HepG2 (cell line): ENCODE measurements at regions of chr9 and their contacts with region 1.

Region 1: DNA sequence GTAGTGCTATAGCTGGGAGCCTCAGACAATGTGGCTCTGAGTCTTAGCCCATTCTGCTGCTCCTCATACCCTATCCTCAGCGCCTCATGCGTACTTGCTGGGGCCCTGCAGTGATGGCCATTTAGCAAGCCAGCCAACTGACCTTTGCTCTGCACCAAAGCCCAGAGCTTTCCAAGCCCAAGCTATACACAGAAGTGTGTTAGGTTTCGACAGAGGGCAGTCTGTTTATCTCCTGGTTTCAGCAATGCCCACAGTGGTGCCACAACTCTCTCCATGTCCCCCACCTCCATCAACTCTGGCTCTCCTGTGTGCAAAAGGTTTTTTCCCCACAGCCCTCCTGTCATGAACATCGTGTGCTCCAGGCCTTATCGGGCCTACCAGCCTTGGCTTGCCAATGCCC is 16.9 kb downstream of the GNG10 start:
- DNase-seq: peak; percentile 74
- ATAC-seq: peak; percentile 100
- H3K4me3 ChIP-seq: no peak overlapping the region; a peak in 1 of 6 replicates
- H3K27ac ChIP-seq: peak overlapping the region; percentile 28
- H3K4me1 ChIP-seq: peaks cover 10% of the 10 kb centered on the region
- H3K27me3 ChIP-seq: no peaks in the 10 kb centered on the region
- CTCF ChIP-seq: peak; percentile 41; the same call in 1 of the 2 replicates
- EP300 ChIP-seq: peak in 1 of 2 experiments; percentile 29; a peak in 1 of 4 replicates
- POLR2A ChIP-seq: no peak
- RAD21 ChIP-seq: no peak

Region 2: DNA sequence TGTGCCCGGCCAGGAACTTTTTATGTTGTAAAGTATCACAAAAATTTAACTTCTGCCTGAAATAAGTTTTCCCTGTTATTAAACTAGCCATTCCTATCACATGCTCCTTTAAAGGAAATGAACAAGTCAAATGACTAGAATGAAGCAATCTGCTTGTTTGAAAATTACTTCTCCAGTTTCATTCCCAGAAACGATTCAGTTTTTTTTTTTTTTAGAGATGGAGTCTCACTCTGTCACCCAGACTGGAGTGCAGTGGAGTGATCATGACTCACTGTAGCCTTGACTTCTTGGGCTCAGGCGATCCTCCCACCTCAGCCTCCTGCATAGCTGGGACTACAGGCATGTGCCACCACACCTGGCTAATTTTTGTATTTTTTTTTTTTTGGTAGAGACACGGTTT is 30.2 kb before region 1 on chr9:
- CTCF ChIA-PET with region 1: no interaction called
- POLR2A ChIA-PET with region 1: no interaction called
- in situ Hi-C with region 1: no loop called
- intact Hi-C with region 1: no loop called
- DNase-seq: no peak
- ATAC-seq: no peak
- H3K4me3 ChIP-seq: no peak overlapping the region
- H3K27ac ChIP-seq: no peak overlapping the region
- H3K4me1 ChIP-seq: peaks cover 16% of the 10 kb centered on the region
- H3K27me3 ChIP-seq: no peaks in the 10 kb centered on the region
- CTCF ChIP-seq: no peak
- EP300 ChIP-seq: no peak
- POLR2A ChIP-seq: no peak
- RAD21 ChIP-seq: no peak

Region 3: GRCh38 chr9:111661150-111661801 is 17.0 kb before region 1 on chr9 and contains the start of gene GNG10:
- CTCF ChIA-PET with region 1: no interaction called
- POLR2A ChIA-PET with region 1: interaction called, 10 read pairs
- in situ Hi-C with region 1: no loop called
- intact Hi-C with region 1: no loop called
- DNase-seq: peak; percentile 23
- ATAC-seq: peak; percentile 94
- H3K4me3 ChIP-seq: peak within 1 kb of the TSS; percentile 74 to 95 (median 91)
- H3K27ac ChIP-seq: peak within 1 kb of the TSS; percentile 39
- H3K4me1 ChIP-seq: peaks cover 20% of the 10 kb centered on the region
- H3K27me3 ChIP-seq: no peaks in the 10 kb centered on the region; a peak in 1 of 5 replicates
- CTCF ChIP-seq: no peak
- EP300 ChIP-seq: no peak
- POLR2A ChIP-seq: peak in 1 of 2 experiments; percentile 68; a peak in 3 of 4 replicates
- RAD21 ChIP-seq: no peak; the same call in 1 of the 2 replicates
- total RNA-seq, gene GNG10: 29.8 and 45.0 TPM in 2 replicates